ENCODE measurements at regions of chr4 and their contacts with region 1.

Region 1: GRCh38 chr4:73099143-73099542 is 29.6 kb upstream of the COX18 start:
- DNase-seq: no peak
- ATAC-seq: peak in 1 of 2 donors; percentile 23

Region 2: GRCh38 chr4:73142995-73143547 is 43.9 kb after region 1 on chr4:
- intact Hi-C with region 1: loop called in 1 of 2 experiments (anchors 10 kb)
- DNase-seq: no peak
- ATAC-seq: no peak

Measured in left cardiac atrium (tissue), 4 donors.